ENCODE measurements at regions of chr7 and their contacts with region 1.

Region 1: DNA sequence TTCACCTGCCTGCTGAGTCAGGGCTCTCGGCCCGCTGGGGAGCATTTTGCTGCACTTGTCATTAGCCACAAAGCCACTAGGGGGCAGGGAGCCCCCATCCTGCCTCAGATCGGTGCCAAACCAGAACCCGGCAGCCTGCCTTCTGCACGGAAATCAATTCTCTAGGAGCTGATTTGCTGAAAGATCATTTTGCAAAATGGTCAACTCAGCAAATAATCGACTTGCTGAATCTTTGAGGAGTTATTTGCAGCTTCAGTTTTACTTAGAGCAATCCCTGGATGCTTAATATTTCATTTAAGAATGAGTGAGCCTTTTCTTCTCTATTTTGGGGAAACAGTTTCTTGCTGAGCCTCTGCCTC is 1.7 kb upstream of the GIMAP8 start:
- DNase-seq: peak; percentile 79 to 87 (median 81)
- H3K4me3 ChIP-seq: peak overlapping the region in 1 of 7 experiments; percentile 11
- H3K27ac ChIP-seq: no peak overlapping the region
- H3K4me1 ChIP-seq: peaks cover 12 to 85% (median 69%) of the 10 kb centered on the region in 4 experiments
- H3K27me3 ChIP-seq: no peaks in the 10 kb centered on the region

Region 2: DNA sequence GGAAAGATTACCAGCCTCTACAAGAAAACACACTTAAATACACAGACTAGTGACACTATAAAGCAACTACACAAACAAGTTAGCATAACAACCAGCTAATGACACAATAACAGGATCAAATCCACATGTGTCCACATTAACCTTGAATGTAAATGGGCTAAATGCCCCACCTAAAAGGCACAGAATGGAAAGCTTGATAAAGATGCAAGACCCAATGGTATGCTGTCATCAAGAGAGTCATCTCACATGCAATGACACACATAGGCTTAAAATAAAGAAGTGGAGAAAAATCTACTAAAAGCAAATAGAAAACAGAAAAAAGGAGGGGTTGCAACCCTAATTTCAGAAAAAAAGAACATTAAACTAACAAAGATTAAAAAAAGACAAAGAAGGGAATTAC is 104.4 kb after region 1 on chr7:
- CTCF ChIA-PET with region 1: no interaction called
- POLR2A ChIA-PET with region 1: no interaction called
- DNase-seq: peak in 1 of 3 donors; percentile 37
- H3K4me3 ChIP-seq: no peak overlapping the region
- H3K27ac ChIP-seq: no peak overlapping the region
- H3K4me1 ChIP-seq: peaks cover 0 to 8% (median 7%) of the 10 kb centered on the region in 4 experiments
- H3K27me3 ChIP-seq: no peaks in the 10 kb centered on the region

Region 3: GRCh38 chr7:150753826-150754603 is 305.2 kb after region 1 on chr7:
- CTCF ChIA-PET with region 1: interaction called, 59 read pairs
- POLR2A ChIA-PET with region 1: interaction called, 3 read pairs
- DNase-seq: peak; percentile 62 to 87 (median 83)
- H3K4me3 ChIP-seq: no peak overlapping the region
- H3K27ac ChIP-seq: peak overlapping the region in 1 of 2 experiments; percentile 49
- H3K4me1 ChIP-seq: peaks cover 0 to 45% (median 32%) of the 10 kb centered on the region in 4 experiments
- H3K27me3 ChIP-seq: no peaks in the 10 kb centered on the region

Region 4: GRCh38 chr7:150759479-150759878 is 310.7 kb after region 1 on chr7:
- CTCF ChIA-PET with region 1: interaction called, 59 read pairs
- POLR2A ChIA-PET with region 1: interaction called, 3 read pairs
- DNase-seq: no peak
- H3K4me3 ChIP-seq: no peak overlapping the region
- H3K27ac ChIP-seq: no peak overlapping the region
- H3K4me1 ChIP-seq: peaks cover 0 to 26% (median 19%) of the 10 kb centered on the region in 4 experiments
- H3K27me3 ChIP-seq: no peaks in the 10 kb centered on the region

Region 5: DNA sequence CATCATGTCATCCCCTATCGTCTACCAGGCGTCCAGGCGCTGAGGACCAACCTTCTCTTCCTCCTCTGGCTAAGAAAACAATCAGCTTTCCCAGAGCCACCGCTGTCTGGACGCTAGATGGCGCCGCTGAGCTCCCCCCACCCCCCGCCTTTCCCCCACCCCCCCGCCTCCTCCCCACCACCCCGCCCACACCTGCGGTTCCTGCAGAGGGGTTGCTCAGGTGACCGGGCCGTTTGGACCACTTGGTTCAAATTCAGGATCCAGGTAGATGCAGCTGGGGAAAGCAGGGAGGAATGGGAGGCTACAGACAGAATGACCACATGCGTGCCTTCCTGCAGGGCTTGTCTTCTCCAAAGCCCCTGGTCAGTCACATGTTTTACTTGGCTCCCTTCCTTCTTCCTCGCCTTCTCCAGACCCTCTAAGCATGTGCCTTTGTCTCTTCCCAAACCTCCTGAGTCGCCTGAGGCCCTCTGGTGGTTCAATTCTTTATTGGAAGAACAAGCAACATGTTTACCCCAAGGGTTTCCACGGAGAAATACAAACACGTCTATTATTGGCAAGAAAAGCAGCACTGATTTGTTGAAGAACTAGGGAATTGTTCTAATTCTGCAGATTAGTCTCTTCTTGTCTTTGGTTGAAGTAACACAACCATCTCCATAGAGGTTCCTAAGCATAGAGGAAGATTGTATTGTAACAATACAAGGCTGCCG is 428.2 kb after region 1 on chr7:
- CTCF ChIA-PET with region 1: interaction called, 17 read pairs
- POLR2A ChIA-PET with region 1: no interaction called
- DNase-seq: peak; percentile 87 to 91 (median 91)
- H3K4me3 ChIP-seq: peak overlapping the region in 2 of 7 experiments; percentile 35 to 54
- H3K27ac ChIP-seq: no peak overlapping the region
- H3K4me1 ChIP-seq: peaks cover 0 to 8% (median 4%) of the 10 kb centered on the region in 4 experiments
- H3K27me3 ChIP-seq: peaks cover 0 to 9% (median 0%) of the 10 kb centered on the region in 5 experiments

Measured in common myeloid progenitor, CD34-positive (primary cell).